Heart left ventricle (tissue), 16 donors: ENCODE measurements at regions of chr1 and their contacts with region 1.

Region 1: GRCh38 chr1:196295766-196296165 is 312.5 kb downstream of the KCNT2 start:
- DNase-seq: no peak
- ATAC-seq: no peak
- H3K4me3 ChIP-seq: no peak overlapping the region
- H3K27ac ChIP-seq: no peak overlapping the region
- H3K4me1 ChIP-seq: no peaks in the 10 kb centered on the region
- H3K27me3 ChIP-seq: no peaks in the 10 kb centered on the region
- CTCF ChIP-seq: no peak
- POLR2A ChIP-seq: no peak

Region 2: GRCh38 chr1:196178083-196178635 is 117.6 kb before region 1 on chr1:
- intact Hi-C with region 1: loop called in 1 of 10 experiments (anchors 10 kb)
- DNase-seq: no peak
- ATAC-seq: peak in 2 of 4 donors; percentile 20 to 71
- H3K4me3 ChIP-seq: no peak overlapping the region
- H3K27ac ChIP-seq: peak overlapping the region in 1 of 12 donors; percentile 6
- H3K4me1 ChIP-seq: peaks cover 0 to 9% (median 0%) of the 10 kb centered on the region in 12 donors
- H3K27me3 ChIP-seq: no peaks in the 10 kb centered on the region
- CTCF ChIP-seq: no peak
- POLR2A ChIP-seq: no peak